H1 (cell line): ENCODE measurements at regions of chr18 and their contacts with region 1.

Region 1: DNA sequence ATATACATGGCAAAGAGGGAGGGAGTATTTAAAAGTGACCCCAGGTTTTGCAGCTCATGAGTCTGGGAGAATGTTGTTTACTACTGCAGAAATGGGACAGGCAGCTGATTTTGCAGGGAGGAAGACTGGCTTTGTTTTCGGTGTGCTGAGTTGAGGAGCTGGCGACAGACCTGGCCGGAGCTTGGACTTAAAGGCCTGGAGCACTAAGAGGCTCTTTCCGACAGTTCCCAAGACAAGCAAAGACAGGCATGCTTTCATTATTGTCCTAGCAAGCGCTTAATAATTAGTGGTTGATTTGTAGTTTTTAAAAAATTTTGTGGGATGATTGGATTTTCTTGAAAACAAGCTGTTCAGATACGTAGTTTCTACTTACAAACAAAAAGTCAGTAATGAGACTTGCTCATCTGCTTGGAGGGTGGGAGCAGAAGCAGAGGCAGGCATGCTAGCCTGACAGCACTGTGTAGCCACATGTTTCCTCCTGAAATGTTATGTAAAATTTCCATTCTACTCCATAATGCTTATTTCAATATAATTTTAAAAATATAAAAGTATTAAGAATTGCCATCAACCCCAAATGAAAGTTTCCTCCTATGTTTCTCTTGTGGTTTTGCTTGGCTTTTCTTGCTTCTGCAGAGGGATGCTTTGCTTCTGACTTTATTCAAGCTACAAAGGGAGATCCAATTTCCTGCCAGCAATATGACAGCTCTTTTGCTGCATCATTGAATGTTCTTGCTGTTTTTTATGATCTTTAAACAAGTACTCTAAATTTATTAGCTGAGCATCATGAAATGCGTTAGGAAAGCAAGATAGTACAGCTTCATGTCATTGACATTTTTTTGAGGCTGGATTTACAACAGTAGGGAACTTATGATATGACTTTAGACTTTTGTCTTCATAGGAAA is 75.8 kb downstream of the PHLPP1 start:
- DNase-seq: no peak
- H3K4me3 ChIP-seq: no peak overlapping the region
- H3K27ac ChIP-seq: no peak overlapping the region
- H3K4me1 ChIP-seq: peaks cover 5 to 32% (median 24%) of the 10 kb centered on the region in 4 experiments; a peak in 6 of 7 replicates
- H3K27me3 ChIP-seq: no peaks in the 10 kb centered on the region
- CTCF ChIP-seq: no peak
- EP300 ChIP-seq: no peak
- POLR2A ChIP-seq: no peak
- RAD21 ChIP-seq: no peak

Region 2: GRCh38 chr18:62802523-62802922 is 11.4 kb after region 1 on chr18:
- CTCF ChIA-PET with region 1: interaction called, 13 read pairs
- POLR2A ChIA-PET with region 1: interaction called, 6 read pairs
- DNase-seq: no peak
- H3K4me3 ChIP-seq: no peak overlapping the region
- H3K27ac ChIP-seq: no peak overlapping the region
- H3K4me1 ChIP-seq: peaks cover 3 to 33% (median 11%) of the 10 kb centered on the region in 4 experiments; a peak in 5 of 7 replicates
- H3K27me3 ChIP-seq: no peaks in the 10 kb centered on the region
- CTCF ChIP-seq: no peak
- EP300 ChIP-seq: no peak
- POLR2A ChIP-seq: no peak
- RAD21 ChIP-seq: peak; percentile 24 to 35